ENCODE measurements at regions of chr13 and their contacts with region 1.

Region 1: GRCh38 chr13:94233401-94233800 is 246.1 kb downstream of the DCT start:
- DNase-seq: peak in 2 of 5 donors; percentile 11 to 60
- ATAC-seq: peak in 1 of 4 donors; percentile 88
- H3K4me3 ChIP-seq: no peak overlapping the region
- H3K27ac ChIP-seq: peak overlapping the region in 1 of 12 donors; percentile 30
- H3K4me1 ChIP-seq: peaks cover 0 to 6% (median 0%) of the 10 kb centered on the region in 12 donors
- H3K27me3 ChIP-seq: no peaks in the 10 kb centered on the region
- CTCF ChIP-seq: no peak
- POLR2A ChIP-seq: no peak

Region 2: DNA sequence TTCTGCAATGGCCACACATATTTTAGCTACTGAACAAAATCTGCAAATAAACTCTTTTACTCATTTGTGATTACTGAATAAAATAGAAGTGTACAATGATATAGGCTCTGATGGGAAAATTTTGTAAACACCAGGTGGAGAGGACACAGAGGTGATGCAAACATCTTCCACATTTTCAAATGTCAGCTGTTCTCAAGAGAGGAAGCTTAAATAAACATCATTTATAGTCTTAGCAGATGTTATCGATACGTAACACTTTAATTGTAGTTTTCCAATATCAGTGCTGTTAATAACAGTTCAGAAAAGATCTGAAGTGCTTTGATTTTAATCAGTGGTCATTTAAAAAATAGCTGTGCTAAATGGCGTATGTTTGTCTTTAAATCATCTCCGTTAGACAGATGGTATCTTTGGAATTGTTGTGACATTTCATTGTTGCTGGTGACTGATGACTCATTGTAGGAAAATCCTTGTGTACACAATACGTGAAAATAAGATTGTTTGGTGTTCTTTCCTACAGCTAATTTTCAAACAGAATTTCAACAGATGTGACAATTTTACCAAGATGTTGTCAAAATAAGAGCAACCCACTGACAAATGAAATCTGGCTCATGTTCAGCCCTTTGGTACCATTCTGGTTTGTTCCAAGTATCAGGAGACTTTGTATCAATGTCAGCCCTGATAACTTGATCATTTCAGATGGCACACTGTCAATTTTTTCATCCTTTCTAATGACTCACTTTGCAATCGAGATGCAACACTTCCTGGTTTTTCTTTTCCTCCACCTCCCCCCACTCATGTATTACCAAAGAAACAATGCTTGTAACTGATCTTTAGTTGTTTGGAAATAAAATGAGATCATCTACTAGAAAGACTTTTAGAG is 269.9 kb before region 1 on chr13:
- intact Hi-C with region 1: no loop called
- DNase-seq: no peak
- ATAC-seq: no peak
- H3K4me3 ChIP-seq: no peak overlapping the region
- H3K27ac ChIP-seq: no peak overlapping the region
- H3K4me1 ChIP-seq: no peaks in the 10 kb centered on the region
- H3K27me3 ChIP-seq: no peaks in the 10 kb centered on the region
- CTCF ChIP-seq: no peak
- POLR2A ChIP-seq: no peak

Region 3: DNA sequence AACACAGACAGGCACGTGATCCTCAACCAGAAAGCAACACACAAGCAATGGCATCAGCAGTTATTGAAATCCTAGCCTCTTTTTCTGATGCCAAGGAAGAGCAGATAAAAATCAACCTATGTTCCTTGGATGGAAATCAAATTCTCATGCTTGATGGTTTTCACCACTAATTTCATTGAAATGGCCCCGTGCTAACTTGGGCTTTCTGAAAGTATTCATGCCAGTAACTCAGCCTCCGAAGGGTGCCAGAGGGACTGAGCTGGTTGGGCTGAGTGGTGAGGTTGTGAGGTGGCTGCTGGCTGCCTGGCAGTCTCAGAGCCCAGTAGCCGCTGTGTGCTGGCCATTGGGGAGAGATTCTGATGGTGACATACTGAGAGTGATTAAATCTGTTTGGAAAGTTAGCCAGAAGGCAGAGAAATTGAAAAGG is 63.2 kb before region 1 on chr13:
- intact Hi-C with region 1: no loop called
- DNase-seq: peak in 2 of 5 donors; percentile 30 to 39
- ATAC-seq: peak in 2 of 4 donors; percentile 61 to 74
- H3K4me3 ChIP-seq: no peak overlapping the region
- H3K27ac ChIP-seq: peak overlapping the region in 2 of 12 donors; percentile 8 to 54
- H3K4me1 ChIP-seq: peaks cover 0 to 14% (median 0%) of the 10 kb centered on the region in 12 donors
- H3K27me3 ChIP-seq: no peaks in the 10 kb centered on the region
- CTCF ChIP-seq: no peak
- POLR2A ChIP-seq: no peak

Region 4: GRCh38 chr13:94195715-94196114 is 37.7 kb before region 1 on chr13:
- intact Hi-C with region 1: no loop called
- DNase-seq: no peak
- ATAC-seq: no peak
- H3K4me3 ChIP-seq: no peak overlapping the region
- H3K27ac ChIP-seq: no peak overlapping the region
- H3K4me1 ChIP-seq: no peaks in the 10 kb centered on the region
- H3K27me3 ChIP-seq: no peaks in the 10 kb centered on the region
- CTCF ChIP-seq: no peak
- POLR2A ChIP-seq: no peak

Region 5: GRCh38 chr13:94312511-94313216 is 79.3 kb after region 1 on chr13:
- intact Hi-C with region 1: loop called in 1 of 10 experiments (anchors 5 kb)
- DNase-seq: no peak
- ATAC-seq: peak in 1 of 4 donors; percentile 7
- H3K4me3 ChIP-seq: no peak overlapping the region
- H3K27ac ChIP-seq: peak overlapping the region in 5 of 12 donors; percentile 21 to 57 (median 38)
- H3K4me1 ChIP-seq: peaks cover 0 to 34% (median 2%) of the 10 kb centered on the region in 12 donors
- H3K27me3 ChIP-seq: no peaks in the 10 kb centered on the region
- CTCF ChIP-seq: no peak
- POLR2A ChIP-seq: no peak

Measured in heart left ventricle (tissue), 16 donors.